PC-3 (cell line): ENCODE measurements at regions of chr2 and their contacts with region 1.

Region 1: DNA sequence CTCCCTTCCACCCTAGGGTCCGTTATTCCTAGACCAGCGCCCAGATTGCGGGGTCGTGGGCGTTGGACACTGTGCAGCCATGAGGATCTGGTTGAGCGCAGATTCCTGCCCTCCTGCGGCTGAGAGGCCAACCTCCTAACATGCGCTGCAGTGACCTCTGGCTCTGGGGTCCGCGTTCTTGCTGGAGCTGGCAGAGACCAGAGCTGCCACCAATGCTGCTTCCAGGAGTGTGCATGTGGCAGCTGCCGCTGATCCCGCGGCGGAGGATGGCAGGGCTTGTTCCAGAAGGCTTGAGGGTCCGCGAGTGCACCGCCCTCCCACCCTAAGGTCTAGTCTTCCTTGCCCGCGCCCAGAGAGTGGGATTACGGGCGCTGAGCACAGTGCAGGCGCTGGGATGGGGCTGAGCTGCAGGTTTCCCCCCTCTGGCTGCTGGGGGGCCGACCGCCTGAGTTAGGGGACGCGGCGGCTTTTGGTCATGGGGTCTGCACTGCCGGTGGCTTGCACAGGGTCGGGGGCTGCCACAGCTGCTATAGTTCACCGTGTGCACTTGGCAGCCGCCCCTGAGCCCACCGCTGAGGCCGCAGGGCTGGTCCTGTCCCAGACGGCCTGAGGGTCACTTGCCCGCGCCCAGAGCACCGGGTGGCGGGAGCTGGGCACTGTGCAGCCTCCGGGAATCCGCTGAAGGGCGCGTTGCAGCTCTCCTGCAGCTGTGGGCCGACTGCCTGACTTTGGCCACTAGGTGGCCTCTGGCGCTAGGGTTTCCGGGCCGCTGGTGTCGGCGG is 145.9 kb downstream of the CCDC74A start:
- DNase-seq: peak; percentile 87
- ATAC-seq: peak; percentile 91
- H3K4me3 ChIP-seq: peak overlapping the region; percentile 74
- H3K27ac ChIP-seq: no peak overlapping the region
- H3K4me1 ChIP-seq: peaks cover 11% of the 10 kb centered on the region
- H3K27me3 ChIP-seq: no peaks in the 10 kb centered on the region
- CTCF ChIP-seq: peak; percentile 76

Region 2: GRCh38 chr2:131154071-131154531 is 519.5 kb before region 1 on chr2:
- CTCF ChIA-PET with region 1: interaction called, 12 read pairs
- POLR2A ChIA-PET with region 1: no interaction called
- intact Hi-C with region 1: loop called (anchors 1 kb)
- DNase-seq: peak; percentile 77
- ATAC-seq: peak; percentile 84
- H3K4me3 ChIP-seq: no peak overlapping the region
- H3K27ac ChIP-seq: no peak overlapping the region
- H3K4me1 ChIP-seq: no peaks in the 10 kb centered on the region
- H3K27me3 ChIP-seq: 0 out of 2 replicates have a peak, but pooled peaks cover 3% of the 10 kb centered on the region
- CTCF ChIP-seq: peak; percentile 95

Region 3: GRCh38 chr2:131413148-131413747 is 260.3 kb before region 1 on chr2:
- CTCF ChIA-PET with region 1: interaction called, 7 read pairs
- POLR2A ChIA-PET with region 1: no interaction called
- intact Hi-C with region 1: loop called (anchors 1 kb)
- DNase-seq: peak; percentile 81
- ATAC-seq: peak; percentile 68
- H3K4me3 ChIP-seq: no peak overlapping the region
- H3K27ac ChIP-seq: no peak overlapping the region
- H3K4me1 ChIP-seq: no peaks in the 10 kb centered on the region
- H3K27me3 ChIP-seq: peaks cover 65% of the 10 kb centered on the region
- CTCF ChIP-seq: peak; percentile 87

Region 4: DNA sequence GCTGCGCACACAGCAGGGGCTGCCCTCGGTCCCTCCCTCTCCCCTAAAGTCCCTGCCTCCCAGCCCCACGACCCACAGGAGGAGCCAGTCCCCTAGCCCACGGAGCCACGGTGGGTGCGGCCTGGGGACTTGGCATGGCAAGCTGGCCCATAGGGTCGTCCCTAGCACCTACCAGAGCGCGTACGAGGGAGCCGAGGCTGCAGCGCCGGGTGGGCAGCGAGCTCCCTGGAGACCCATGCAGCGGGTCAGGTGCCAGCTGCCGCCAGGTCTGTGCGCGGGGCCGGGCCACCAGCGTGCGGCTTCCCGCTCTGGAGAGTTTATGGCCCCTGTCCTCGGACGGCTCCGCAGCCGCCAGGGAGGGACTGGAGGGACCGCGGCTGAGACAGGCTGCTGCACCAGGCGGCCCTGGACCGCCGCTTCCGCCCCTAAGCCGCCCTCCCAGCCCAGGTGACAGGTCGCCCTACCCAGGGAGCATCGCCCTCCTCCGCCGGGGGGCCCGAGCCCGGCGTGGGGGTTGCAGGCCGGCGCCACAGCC is 127.7 kb after region 1 on chr2:
- CTCF ChIA-PET with region 1: no interaction called
- POLR2A ChIA-PET with region 1: no interaction called
- intact Hi-C with region 1: loop called (anchors 1 kb)
- DNase-seq: no peak
- ATAC-seq: no peak
- H3K4me3 ChIP-seq: no peak overlapping the region
- H3K27ac ChIP-seq: no peak overlapping the region
- H3K4me1 ChIP-seq: no peaks in the 10 kb centered on the region
- H3K27me3 ChIP-seq: no peaks in the 10 kb centered on the region
- CTCF ChIP-seq: no peak